ENCODE measurements at regions of chr14 and their contacts with region 1.

Region 1: DNA sequence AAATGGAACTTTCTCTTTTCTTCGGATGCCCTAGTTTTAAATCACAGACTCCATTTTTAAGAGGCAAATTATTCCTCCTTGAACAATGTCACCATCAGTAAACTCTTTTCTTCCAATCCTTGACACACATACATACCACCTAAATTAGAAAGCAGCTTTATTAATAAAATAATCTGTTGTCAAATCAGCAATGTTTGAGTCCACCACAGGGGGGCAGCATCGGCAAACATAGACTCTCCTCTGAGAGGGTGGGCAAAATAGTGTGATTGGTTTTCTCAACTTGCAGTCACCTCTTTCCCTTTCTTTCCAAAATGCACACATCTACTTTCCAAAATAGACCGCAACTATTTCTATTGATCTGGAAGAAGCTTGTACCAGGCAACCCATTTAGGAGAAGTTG is 438.4 kb upstream of the OR4E1 start:
- DNase-seq: peak; percentile 46
- H3K4me3 Mint-ChIP-seq: no peak overlapping the region
- H3K27ac Mint-ChIP-seq: no peak overlapping the region
- H3K4me1 Mint-ChIP-seq: no peaks in the 10 kb centered on the region
- H3K27me3 Mint-ChIP-seq: peaks cover 59% of the 10 kb centered on the region
- CTCF ChIP-seq: peak; percentile 56

Region 2: GRCh38 chr14:22163051-22163450 is 51.0 kb after region 1 on chr14:
- CTCF ChIA-PET with region 1: interaction called, 6 read pairs
- POLR2A ChIA-PET with region 1: no interaction called
- intact Hi-C with region 1: loop called (anchors 2 kb)
- DNase-seq: peak; percentile 18
- H3K4me3 Mint-ChIP-seq: no peak overlapping the region
- H3K27ac Mint-ChIP-seq: no peak overlapping the region
- H3K4me1 Mint-ChIP-seq: peaks cover 14% of the 10 kb centered on the region
- H3K27me3 Mint-ChIP-seq: peaks cover 24% of the 10 kb centered on the region
- CTCF ChIP-seq: peak; percentile 32

Measured in MCF 10A (cell line).